Ovary (tissue), 10 donors: ENCODE measurements at regions of chr4 and their contacts with region 1.

Region 1: GRCh38 chr4:151325111-151325948 is at the start of gene SH3D19:
- DNase-seq: peak; percentile 68 to 81 (median 74)
- H3K4me3 ChIP-seq: peak within 1 kb of the TSS; percentile 80
- H3K27ac ChIP-seq: peak within 1 kb of the TSS; percentile 84 to 93
- H3K4me1 ChIP-seq: peaks cover 11% of the 10 kb centered on the region
- H3K27me3 ChIP-seq: no peaks in the 10 kb centered on the region
- CTCF ChIP-seq: no peak
- EP300 ChIP-seq: no peak
- POLR2A ChIP-seq: peak; percentile 48
- total RNA-seq, gene SH3D19: 44.0 to 117 (median 91.4) TPM

Region 2: DNA sequence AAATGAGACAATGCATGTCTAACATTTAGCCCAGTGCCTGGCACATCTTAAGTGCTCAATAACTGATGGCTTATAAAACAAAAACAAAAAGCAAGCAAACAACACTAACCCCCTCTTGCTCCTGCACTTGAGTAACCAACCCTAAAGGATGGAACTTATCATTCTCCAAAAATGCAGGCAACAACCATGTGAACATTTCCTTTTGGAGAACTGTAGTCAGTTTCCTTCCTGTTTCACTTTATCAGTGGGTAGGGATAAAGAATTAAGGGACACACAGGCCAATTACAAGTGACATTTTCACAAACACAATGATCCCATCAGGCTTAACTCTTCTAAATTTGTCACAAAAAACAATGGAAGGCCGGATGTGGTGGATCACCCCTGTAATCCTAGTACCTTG is 195.5 kb before region 1 on chr4:
- intact Hi-C with region 1: loop called in 1 of 4 experiments (anchors 10 kb)
- DNase-seq: no peak
- H3K4me3 ChIP-seq: no peak overlapping the region
- H3K27ac ChIP-seq: no peak overlapping the region
- H3K4me1 ChIP-seq: no peaks in the 10 kb centered on the region
- H3K27me3 ChIP-seq: no peaks in the 10 kb centered on the region
- CTCF ChIP-seq: no peak
- EP300 ChIP-seq: no peak
- POLR2A ChIP-seq: no peak

Region 3: GRCh38 chr4:151202851-151203455 is 122.4 kb before region 1 on chr4:
- intact Hi-C with region 1: no loop called
- DNase-seq: peak in 1 of 5 donors; percentile 23
- H3K4me3 ChIP-seq: no peak overlapping the region
- H3K27ac ChIP-seq: peak overlapping the region in 1 of 2 donors; percentile 33
- H3K4me1 ChIP-seq: peaks cover 25% of the 10 kb centered on the region
- H3K27me3 ChIP-seq: no peaks in the 10 kb centered on the region
- CTCF ChIP-seq: no peak
- EP300 ChIP-seq: no peak
- POLR2A ChIP-seq: no peak